Activated B cell treated with CpG ODN at 0.5 μM for 24 hours (primary cell): ENCODE measurements at regions of chr20 and their contacts with region 1.

Region 1: DNA sequence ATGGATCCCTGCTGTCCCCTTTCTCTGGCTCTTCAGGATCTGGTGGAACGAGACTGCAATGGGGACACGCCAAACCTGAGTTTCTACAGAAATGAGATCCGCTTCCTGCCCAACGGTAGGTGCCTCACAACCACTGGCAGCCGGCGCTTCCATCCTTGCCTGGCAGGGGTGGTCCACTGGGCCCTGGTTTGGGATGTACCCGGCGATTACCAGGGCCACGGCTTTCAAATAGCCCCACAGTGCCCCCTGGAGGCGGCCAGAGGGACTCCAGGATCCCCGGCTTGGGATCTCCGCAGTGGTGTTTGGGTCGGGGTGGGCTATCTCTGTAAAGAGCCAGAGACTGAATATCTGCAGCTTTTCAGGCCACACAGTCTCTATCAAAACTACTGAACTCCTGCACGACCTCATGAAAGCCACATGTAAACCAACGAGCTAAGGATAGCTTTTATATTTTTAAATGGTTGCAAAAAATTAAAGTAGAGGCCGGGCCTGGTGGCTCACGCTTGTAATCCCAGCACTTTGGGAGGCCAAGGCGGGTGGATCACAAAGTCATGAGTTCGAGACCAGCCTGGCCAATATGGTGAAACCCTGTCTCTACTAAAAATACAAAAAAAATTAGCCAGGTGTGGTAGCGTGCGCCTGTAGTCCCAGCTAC is 3.7 kb downstream of the OGFR start:
- DNase-seq: peak; percentile 75
- ATAC-seq: peak; percentile 56
- H3K4me3 Mint-ChIP-seq: peak overlapping the region; percentile 48
- H3K27ac Mint-ChIP-seq: peak overlapping the region; percentile 69
- H3K4me1 Mint-ChIP-seq: peaks cover 31% of the 10 kb centered on the region
- H3K27me3 Mint-ChIP-seq: no peaks in the 10 kb centered on the region
- CTCF ChIP-seq: peak; percentile 48

Region 2: DNA sequence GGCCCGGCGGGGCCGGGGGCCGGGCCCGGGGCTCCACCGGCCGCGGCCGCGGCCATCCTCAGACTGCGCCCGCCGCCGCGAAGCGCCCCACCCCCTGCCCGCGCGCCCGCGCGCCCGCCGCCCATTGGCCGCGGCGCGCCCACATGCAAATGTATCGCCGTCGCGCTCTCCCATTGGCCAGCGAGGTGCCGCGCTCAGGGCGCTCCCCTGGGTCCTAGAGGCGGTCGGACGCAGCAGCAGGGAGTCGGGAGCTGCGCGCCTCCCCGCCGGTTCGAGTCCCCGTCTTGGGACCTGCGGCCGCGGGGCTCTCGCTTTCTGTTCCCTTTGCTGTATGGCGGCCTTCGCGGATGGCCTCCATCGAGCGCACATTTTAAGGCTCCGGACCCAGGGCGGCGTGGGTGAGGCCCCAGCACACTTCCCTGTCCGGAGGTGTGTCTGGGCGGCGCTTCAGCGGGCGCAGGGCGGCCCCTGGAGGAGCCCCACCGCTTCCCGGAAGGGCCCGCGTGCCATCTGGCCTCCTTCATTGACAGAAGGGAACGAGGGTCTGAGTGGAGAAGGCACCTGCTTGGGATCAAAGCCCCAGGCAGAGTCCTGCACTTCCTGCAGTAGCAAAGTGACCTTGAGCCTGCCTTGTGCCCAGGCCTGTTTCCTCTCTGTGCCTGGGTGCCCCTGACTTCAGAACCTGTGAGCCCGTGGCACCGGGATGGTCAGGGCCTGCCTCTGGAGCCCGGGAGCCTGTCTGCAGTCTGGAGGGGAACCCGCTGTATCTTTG is 400.9 kb before region 1 on chr20 and contains the start of gene CABLES2:
- CTCF ChIA-PET with region 1: no interaction called
- POLR2A ChIA-PET with region 1: no interaction called
- intact Hi-C with region 1: loop called (anchors 1 kb)
- DNase-seq: peak; percentile 90
- ATAC-seq: peak; percentile 90
- H3K4me3 Mint-ChIP-seq: peak within 1 kb of the TSS; percentile 88
- H3K27ac Mint-ChIP-seq: peak within 1 kb of the TSS; percentile 86
- H3K4me1 Mint-ChIP-seq: peaks cover 36% of the 10 kb centered on the region
- H3K27me3 Mint-ChIP-seq: no peaks in the 10 kb centered on the region
- CTCF ChIP-seq: no peak
- total RNA-seq, gene CABLES2: 6.6 and 7.0 TPM in 2 replicates

Region 3: GRCh38 chr20:62500237-62500864 is 308.0 kb before region 1 on chr20:
- CTCF ChIA-PET with region 1: interaction called, 11 read pairs
- POLR2A ChIA-PET with region 1: no interaction called
- intact Hi-C with region 1: loop called (anchors 1 kb)
- DNase-seq: peak; percentile 77
- ATAC-seq: peak; percentile 49
- H3K4me3 Mint-ChIP-seq: no peak overlapping the region
- H3K27ac Mint-ChIP-seq: peak overlapping the region; percentile 67
- H3K4me1 Mint-ChIP-seq: peaks cover 42% of the 10 kb centered on the region
- H3K27me3 Mint-ChIP-seq: no peaks in the 10 kb centered on the region
- CTCF ChIP-seq: peak; percentile 33

Region 4: DNA sequence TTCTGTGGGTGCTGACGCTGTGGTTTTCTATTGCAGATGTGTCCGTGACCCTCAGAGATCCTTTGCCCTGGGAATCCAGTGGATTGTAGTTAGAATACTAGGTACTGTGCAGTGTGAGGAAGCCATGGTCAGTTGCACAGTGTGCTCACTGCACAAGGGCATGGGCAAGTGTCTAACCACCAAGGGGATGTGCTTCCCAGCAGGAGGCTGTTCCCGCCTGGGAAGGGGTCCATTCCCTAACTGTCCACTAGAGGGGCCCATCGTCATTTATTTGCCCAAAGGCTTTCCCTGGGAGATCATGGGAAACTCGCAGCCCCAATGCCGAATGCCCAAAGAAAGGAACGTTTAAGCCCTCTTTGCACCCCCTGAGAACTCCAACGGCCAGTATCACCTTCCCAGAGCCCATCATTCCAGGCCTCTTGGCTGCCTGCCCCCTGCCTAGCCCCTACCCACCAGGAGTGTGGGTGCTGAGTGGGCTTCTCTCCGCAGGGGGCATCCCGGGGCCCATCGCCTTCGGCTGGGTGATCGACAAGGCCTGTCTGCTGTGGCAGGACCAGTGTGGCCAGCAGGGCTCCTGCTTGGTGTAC is 139.8 kb before region 1 on chr20:
- CTCF ChIA-PET with region 1: interaction called, 4 read pairs
- POLR2A ChIA-PET with region 1: interaction called, 4 read pairs
- intact Hi-C with region 1: loop called (anchors 1 kb)
- DNase-seq: no peak
- ATAC-seq: peak; percentile 45
- H3K4me3 Mint-ChIP-seq: no peak overlapping the region
- H3K27ac Mint-ChIP-seq: no peak overlapping the region
- H3K4me1 Mint-ChIP-seq: no peaks in the 10 kb centered on the region
- H3K27me3 Mint-ChIP-seq: no peaks in the 10 kb centered on the region
- CTCF ChIP-seq: no peak

Region 5: DNA sequence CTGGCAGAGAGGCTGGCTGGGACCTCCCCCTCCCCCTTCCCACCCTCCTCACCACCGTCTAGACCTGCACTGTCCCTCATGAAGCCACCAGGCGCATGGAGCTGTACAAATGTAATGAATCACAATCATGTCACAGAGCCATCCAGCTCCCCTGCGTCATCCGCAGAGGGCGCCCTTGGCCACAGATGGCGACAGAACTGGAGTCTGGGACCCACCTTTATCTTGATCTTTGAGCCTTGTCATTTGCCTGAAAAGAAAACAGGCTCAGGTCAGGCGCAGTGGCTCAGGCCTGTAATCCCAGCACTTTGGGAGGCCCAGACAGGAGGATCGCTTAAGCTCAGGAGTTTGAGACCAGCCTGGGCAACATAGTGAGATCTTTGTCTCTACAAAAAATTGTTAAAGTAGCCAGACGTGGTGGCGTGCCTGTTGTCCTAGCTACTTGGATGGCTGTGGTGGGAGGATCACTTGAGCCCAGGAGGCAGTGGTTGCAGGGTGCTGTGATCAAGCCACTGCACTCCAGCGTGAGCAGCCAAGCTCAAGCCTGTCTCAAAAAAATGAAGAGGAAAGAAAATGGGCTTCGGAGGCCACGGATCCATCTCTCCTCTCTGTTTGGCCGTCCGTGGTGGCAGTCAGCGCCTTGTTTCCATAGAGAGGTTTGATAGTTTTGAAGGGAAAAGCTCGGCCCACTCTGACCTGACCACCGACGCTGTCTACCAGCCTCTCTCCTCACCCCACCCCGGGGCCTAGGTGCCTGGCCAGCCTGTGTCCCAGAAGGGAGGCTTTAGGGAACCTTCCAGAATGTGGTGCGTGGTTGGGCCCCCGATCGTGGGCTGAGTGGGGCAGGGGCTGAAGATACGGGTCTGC is 14.7 kb after region 1 on chr20:
- CTCF ChIA-PET with region 1: interaction called, 4 read pairs
- POLR2A ChIA-PET with region 1: no interaction called
- intact Hi-C with region 1: loop called (anchors 1 kb)
- DNase-seq: no peak
- ATAC-seq: peak; percentile 15
- H3K4me3 Mint-ChIP-seq: no peak overlapping the region
- H3K27ac Mint-ChIP-seq: no peak overlapping the region
- H3K4me1 Mint-ChIP-seq: peaks cover 21% of the 10 kb centered on the region
- H3K27me3 Mint-ChIP-seq: peaks cover 8% of the 10 kb centered on the region
- CTCF ChIP-seq: no peak

Region 6: DNA sequence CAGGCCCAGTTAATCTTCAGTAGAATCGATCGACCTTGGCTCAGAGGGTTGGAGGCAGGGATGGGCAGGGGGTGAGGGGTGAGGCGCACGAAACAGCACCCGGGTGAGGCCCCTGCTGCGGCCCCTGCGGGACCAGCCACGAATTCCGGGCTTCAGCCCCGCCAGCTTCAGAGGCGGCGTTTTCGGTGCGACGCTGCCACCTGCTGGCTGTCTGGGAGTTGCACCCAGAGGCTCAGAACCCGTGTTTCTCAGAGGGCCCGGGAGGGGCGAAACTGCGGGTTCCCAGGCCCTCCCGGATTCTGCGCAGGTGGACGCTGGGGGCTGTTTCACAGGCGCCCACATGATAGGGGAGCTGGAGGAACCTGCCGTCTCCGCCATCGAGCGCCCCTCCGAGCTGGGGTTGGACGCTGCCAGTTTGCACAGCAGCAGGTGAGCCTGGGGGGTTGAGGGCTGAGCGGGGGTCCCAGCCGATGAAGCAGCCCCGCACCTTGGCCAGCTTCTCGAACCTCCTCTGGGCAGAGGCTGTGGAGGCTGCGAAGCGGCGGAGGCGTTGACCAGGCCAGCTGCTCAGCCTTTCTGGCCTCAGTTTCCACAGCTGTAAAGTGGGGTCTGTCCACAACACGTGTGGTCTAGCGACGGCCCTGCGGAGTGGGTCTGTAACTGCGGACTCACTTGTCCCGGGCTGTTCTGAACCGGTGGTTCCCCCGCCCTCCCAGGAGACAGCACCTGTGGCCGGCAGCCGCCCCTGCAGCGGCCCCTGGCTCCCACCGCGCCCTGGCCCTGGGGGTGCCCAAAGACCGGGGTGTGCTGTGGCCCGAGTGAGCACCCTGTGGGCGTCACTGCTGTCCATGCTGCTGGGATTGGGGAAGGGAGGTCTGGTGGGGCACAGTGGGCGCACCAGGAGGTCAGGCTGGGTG is 201.0 kb after region 1 on chr20:
- CTCF ChIA-PET with region 1: no interaction called
- POLR2A ChIA-PET with region 1: no interaction called
- intact Hi-C with region 1: loop called (anchors 5 kb)
- DNase-seq: peak; percentile 86
- ATAC-seq: peak; percentile 86
- H3K4me3 Mint-ChIP-seq: peak overlapping the region; percentile 46
- H3K27ac Mint-ChIP-seq: no peak overlapping the region
- H3K4me1 Mint-ChIP-seq: peaks cover 26% of the 10 kb centered on the region
- H3K27me3 Mint-ChIP-seq: peaks cover 43% of the 10 kb centered on the region
- CTCF ChIP-seq: no peak